OCI-LY7 (cell line): ENCODE measurements at regions of chr12 and their contacts with region 1.

Region 1: DNA sequence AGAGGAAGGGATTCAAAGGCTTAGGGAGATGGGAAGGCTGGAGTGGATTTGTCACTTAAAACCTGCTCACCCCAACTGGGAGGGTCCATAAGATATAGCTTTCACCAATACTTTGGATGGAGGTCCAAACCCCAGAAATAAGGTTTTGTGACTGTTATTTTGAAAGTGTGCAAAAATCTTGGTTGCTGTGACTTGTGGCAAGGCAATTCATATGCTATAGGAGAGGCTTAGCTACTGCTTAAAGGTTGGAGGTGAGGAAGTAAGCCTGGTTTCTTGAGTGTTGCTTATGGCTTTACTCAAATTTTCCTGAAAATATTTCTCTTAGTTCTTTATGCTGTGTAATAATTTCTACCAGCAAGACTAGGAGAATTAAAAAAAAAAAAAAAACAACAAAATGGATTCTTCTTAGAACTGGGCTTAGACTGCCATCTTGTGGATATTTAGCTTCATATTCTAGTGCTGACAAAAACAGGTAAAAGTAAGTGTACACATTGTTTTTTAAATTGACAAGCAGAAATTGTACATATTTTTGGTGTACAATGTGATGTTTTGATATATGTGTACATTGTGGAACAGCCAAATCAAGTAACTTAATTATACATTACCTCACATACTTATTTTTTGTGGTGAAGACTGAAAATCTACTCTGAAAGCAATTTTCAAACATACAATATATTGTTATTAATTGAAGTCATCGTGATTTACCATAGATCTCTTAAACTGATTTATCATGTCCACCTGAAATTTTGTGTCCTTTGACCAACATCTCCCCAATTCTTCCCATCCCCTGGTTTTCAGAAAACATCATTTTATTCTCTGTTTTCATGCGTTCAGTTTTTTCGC is 23.0 kb downstream of the PDE6H start:
- DNase-seq: peak; percentile 81
- H3K4me3 ChIP-seq: no peak overlapping the region
- H3K27ac ChIP-seq: no peak overlapping the region
- H3K4me1 ChIP-seq: peaks cover 30% of the 10 kb centered on the region
- CTCF ChIP-seq: peak; percentile 97

Region 2: DNA sequence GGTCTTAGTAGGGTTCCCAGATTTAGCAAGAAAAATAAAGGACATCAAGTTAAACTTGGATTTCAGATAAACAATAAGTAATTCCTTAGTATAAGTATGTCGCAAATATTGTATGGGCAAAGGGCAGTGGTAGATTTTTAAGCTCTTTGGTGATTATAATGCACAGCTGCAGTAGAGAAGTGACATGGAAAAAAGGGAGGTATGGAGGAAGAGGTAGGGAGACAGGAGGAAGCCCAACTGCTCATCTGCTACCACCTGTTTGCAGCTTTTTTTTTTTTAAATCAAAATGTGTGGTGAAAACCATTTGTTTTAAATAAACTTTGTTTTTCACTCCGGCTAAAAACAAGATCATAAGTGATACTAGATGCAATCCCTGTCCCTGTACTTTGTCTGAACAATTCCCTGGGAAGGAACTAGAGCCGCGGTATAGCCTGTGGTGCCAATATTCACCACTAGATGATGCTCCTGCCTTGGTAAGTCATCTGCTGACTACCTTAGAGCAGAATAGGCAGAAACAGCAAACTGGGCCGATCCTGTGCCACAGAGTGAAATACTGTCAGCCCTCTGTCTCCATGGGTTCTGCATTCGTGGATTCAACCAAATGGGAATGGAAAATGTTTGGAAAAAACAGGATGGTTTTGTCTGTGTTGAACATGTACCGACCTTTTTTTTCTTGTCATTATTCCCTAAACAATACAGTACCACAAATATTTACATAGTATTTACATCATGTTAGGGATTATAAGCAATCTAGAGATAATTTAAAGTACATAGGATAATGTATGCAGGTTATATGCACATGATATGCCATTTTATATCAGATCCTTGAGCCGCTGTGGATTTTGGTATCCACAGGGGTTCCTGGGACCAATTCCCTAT is 365.7 kb before region 1 on chr12:
- CTCF ChIA-PET with region 1: no interaction called
- POLR2A ChIA-PET with region 1: no interaction called
- intact Hi-C with region 1: loop called (anchors 2 kb)
- DNase-seq: peak; percentile 82
- H3K4me3 ChIP-seq: no peak overlapping the region
- H3K27ac ChIP-seq: no peak overlapping the region
- H3K4me1 ChIP-seq: peaks cover 28% of the 10 kb centered on the region
- CTCF ChIP-seq: peak; percentile 99

Region 3: GRCh38 chr12:14756334-14757143 is 239.3 kb before region 1 on chr12:
- CTCF ChIA-PET with region 1: no interaction called
- POLR2A ChIA-PET with region 1: no interaction called
- intact Hi-C with region 1: no loop called
- DNase-seq: no peak
- H3K4me3 ChIP-seq: no peak overlapping the region
- H3K27ac ChIP-seq: no peak overlapping the region
- H3K4me1 ChIP-seq: no peaks in the 10 kb centered on the region
- CTCF ChIP-seq: peak; percentile 67

Region 4: GRCh38 chr12:14845350-14845750 is 150.5 kb before region 1 on chr12:
- CTCF ChIA-PET with region 1: interaction called, 4 read pairs
- POLR2A ChIA-PET with region 1: interaction called, 24 read pairs
- intact Hi-C with region 1: loop called (anchors 1 kb)
- DNase-seq: peak; percentile 75
- H3K4me3 ChIP-seq: no peak overlapping the region
- H3K27ac ChIP-seq: no peak overlapping the region
- H3K4me1 ChIP-seq: peaks cover 5% of the 10 kb centered on the region
- CTCF ChIP-seq: peak; percentile 99

Region 5: GRCh38 chr12:14960548-14961465 is 35.0 kb before region 1 on chr12:
- CTCF ChIA-PET with region 1: interaction called, 3 read pairs
- POLR2A ChIA-PET with region 1: interaction called, 3 read pairs
- intact Hi-C with region 1: loop called (anchors 2 kb)
- DNase-seq: peak; percentile 42
- H3K4me3 ChIP-seq: peak overlapping the region; percentile 72
- H3K27ac ChIP-seq: peak overlapping the region; percentile 97
- H3K4me1 ChIP-seq: peaks cover 53% of the 10 kb centered on the region
- CTCF ChIP-seq: no peak

Region 6: DNA sequence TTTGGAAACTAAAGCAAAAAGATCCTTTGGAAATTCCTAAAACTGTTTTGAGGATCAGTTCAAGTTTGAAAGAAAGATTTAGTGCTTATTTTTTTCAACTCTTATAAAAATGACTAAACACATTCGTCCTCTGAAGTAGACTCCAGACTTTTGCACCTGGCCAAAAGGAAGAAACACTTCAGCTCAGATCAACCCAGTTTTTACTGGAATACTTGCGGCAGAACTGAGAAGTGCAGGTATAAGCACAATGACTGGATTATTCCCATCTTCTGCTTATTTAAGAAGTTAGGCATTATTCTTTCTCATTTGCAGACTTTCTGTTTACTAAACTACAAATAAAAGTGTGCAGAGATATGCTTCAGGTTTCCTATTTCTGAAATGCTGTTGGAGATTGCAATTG is 18.9 kb after region 1 on chr12:
- CTCF ChIA-PET with region 1: no interaction called
- POLR2A ChIA-PET with region 1: no interaction called
- intact Hi-C with region 1: no loop called
- DNase-seq: no peak
- H3K4me3 ChIP-seq: no peak overlapping the region
- H3K27ac ChIP-seq: no peak overlapping the region
- H3K4me1 ChIP-seq: no peaks in the 10 kb centered on the region
- CTCF ChIP-seq: 0 out of 2 replicates have a peak, but pooled peaks have one; percentile 21

Region 7: DNA sequence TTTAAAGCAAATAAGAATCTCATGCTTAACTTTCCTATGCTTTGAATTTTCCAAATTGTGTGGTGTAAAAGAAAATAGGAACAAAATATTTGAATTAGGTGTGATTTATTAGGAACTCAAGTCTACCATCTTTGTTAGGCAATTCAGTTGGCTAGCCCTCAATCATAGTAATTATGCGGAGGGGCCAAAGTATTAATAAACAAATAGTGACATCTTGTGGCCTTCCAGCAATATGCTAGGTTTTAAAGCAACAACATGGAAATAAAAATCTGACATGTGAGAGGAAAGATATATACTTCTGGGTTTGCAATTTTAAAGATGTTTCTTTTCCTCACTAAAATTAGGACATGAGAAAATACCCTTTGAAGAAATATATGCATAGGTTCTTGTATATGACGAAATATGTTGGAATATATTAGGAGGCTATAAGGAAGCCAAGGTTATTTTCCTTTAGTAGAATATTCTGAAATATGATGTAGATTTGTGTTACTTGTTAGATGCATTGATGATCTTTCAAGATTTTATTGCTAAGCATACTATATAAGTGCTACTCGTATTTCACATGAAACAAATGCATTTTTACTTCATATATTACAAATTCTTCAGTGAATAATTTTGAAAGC is 526.9 kb after region 1 on chr12:
- CTCF ChIA-PET with region 1: no interaction called
- POLR2A ChIA-PET with region 1: no interaction called
- intact Hi-C with region 1: loop called (anchors 5 kb)
- DNase-seq: peak; percentile 62
- H3K4me3 ChIP-seq: no peak overlapping the region
- H3K27ac ChIP-seq: no peak overlapping the region
- H3K4me1 ChIP-seq: peaks cover 15% of the 10 kb centered on the region
- CTCF ChIP-seq: peak; percentile 86